ENCODE measurements at regions of chr2 and their contacts with region 1.

Region 1: DNA sequence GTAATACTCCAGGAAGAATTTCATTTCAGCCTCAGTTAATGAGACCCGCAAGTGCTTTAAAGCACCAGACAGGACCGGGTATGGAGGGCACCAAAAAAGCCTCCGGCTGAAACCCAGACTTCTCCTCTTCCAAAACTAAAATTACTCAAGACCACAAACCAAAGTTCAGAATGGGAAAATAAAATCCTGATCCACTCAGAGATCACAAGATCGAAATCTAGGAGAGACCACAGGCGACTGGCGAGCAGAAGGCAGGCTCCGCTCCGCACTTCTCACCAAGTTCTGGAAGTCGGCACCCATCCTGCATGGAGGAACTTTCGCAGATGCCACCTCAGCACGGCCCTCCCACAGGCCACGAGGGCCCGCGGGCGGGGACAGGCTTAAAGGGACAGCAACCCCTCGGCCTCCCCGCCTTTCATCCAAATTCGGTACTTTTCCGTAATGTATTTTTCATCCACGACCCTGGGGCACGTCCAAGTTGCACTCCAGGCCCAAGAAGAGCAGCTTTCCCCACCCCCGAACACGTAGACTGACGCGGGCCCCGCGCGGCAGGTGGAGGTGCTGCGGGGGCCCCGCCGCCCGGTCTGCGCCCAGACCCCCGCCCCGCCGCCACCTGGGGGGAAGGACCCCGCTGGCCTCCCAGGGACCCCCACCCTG is 43.7 kb downstream of the HDLBP start:
- DNase-seq: peak; percentile 86
- H3K4me3 ChIP-seq: peak overlapping the region; percentile 76 to 99 (median 88)
- H3K27ac ChIP-seq: peak overlapping the region; percentile 91 to 99 (median 98)
- H3K4me1 ChIP-seq: peaks cover 14 to 29% (median 24%) of the 10 kb centered on the region in 4 donors
- H3K27me3 ChIP-seq: no peaks in the 10 kb centered on the region
- CTCF ChIP-seq: no peak
- EP300 ChIP-seq: no peak
- POLR2A ChIP-seq: no peak

Region 2: GRCh38 chr2:241315093-241315878 is 43.5 kb after region 1 on chr2 and contains the start of gene HDLBP:
- in situ Hi-C with region 1: no loop called
- intact Hi-C with region 1: loop called (anchors 2 kb)
- DNase-seq: peak; percentile 100
- H3K4me3 ChIP-seq: peak within 1 kb of the TSS; percentile 59 to 89 (median 87)
- H3K27ac ChIP-seq: peak within 1 kb of the TSS; percentile 96 to 99 (median 98)
- H3K4me1 ChIP-seq: peaks cover 18 to 72% (median 32%) of the 10 kb centered on the region in 4 donors
- H3K27me3 ChIP-seq: no peaks in the 10 kb centered on the region
- CTCF ChIP-seq: peak in 2 of 5 experiments; percentile 11 to 17
- EP300 ChIP-seq: no peak
- POLR2A ChIP-seq: peak; percentile 92
- total RNA-seq, gene HDLBP: 168 to 1,885 (median 314) TPM